Astrocyte of the cerebellum (primary cell): ENCODE measurements at regions of chr16 and their contacts with region 1.

Region 1: GRCh38 chr16:10609402-10609774 is 29.0 kb upstream of the EMP2 start:
- DNase-seq: no peak
- H3K4me3 ChIP-seq: no peak overlapping the region
- CTCF ChIP-seq: no peak

Region 2: GRCh38 chr16:10663146-10663545 is 53.8 kb after region 1 on chr16:
- in situ Hi-C with region 1: loop called (anchors 5 kb)
- DNase-seq: no peak
- H3K4me3 ChIP-seq: no peak overlapping the region
- CTCF ChIP-seq: no peak